ENCODE measurements at regions of chr9 and their contacts with region 1.

Region 1: DNA sequence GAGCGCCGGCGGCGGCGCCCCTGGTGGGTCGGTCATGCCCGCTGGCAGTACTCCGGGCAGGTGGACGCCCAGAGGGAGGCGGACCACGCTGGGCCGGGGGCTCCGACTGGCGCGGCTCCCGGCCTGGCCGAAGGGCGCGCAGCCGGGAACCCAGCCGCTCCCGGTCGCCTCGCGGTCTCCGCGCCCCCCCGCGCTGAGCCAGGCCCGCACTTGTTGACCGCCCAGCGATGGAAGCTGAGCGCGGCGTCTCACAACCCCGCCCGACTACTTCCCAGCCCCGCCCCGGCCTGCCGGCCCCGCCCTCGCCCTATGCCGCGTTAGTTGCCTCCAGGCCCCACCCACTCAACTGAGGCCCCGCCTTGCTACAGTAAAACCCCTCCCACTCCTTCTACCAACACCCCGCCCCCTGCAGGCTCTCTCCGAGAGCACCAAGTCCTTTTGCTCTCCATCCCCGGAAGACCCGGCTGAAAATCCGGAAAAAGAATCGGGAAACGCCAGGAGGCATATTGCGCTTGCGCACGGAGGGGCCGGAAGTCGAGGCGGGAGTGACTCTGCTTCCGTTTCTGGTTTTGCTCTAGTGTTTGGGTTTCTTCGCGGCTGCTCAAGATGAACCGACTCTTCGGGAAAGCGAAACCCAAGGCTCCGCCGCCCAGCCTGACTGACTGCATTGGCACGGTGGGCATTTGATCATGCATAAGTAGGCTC is at the starts of genes BAG1 and CHMP5:
- DNase-seq: peak; percentile 100
- H3K4me3 Mint-ChIP-seq: peak within 1 kb of the TSS; percentile 97
- H3K27ac Mint-ChIP-seq: peak within 1 kb of the TSS; percentile 99
- H3K4me1 Mint-ChIP-seq: peaks cover 52% of the 10 kb centered on the region
- H3K27me3 Mint-ChIP-seq: no peaks in the 10 kb centered on the region
- total RNA-seq, gene BAG1: 72.4 and 73.6 TPM in 2 replicates
- total RNA-seq, gene CHMP5: 73.9 and 77.7 TPM in 2 replicates

Region 2: GRCh38 chr9:33167046-33167808 is 97.4 kb before region 1 on chr9 and contains the start of gene B4GALT1:
- intact Hi-C with region 1: loop called (anchors 1 kb)
- DNase-seq: peak; percentile 97
- H3K4me3 Mint-ChIP-seq: peak within 1 kb of the TSS; percentile 95
- H3K27ac Mint-ChIP-seq: peak within 1 kb of the TSS; percentile 98
- H3K4me1 Mint-ChIP-seq: peaks cover 65% of the 10 kb centered on the region
- H3K27me3 Mint-ChIP-seq: no peaks in the 10 kb centered on the region
- total RNA-seq, gene B4GALT1: 53.8 and 55.7 TPM in 2 replicates

Region 3: DNA sequence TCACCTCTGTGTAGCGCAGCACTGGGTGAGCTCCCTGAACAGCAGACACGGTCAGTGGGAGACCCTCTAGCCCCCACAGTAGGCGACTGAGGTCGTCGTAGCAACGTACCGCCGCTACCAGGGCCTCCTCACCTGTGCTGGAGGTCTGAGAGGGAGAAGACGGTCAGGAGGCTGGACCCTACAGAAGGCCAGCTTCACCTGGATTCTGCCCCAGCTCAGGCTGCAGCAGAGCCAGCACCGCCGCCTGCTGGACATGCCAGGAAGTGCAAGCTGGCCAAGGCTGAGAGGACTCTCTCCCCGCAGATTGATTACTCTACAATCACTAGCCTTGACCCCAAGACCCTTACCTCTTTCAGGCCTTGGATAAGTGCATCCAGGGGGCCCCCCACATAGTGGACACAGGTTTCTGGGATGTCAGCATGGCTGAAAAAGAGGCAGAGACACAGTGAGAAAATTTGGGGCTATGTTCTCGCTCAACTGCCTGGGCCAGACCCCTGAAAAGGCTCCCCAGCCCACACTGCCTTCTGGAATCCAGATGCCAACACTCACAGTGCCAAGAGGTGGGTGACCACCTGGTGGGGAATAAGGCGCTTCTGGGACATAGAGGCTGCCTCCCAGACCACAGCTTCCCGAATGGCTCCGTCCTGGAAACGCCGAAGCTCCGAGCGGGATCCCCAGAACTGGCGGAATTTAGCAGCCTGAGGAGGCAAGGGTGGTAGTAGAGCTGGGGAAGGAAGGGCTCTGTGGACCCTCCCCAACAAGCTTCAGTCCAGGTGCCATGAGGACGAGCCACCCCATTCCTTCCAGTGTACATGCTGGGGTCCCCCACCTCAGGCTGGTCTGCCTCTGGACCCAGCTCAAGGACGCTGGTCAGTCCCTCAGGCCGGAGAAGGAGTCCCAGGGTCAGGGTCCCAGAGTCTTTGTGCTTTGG is 202.2 kb after region 1 on chr9:
- intact Hi-C with region 1: no loop called
- DNase-seq: peak; percentile 94
- H3K4me3 Mint-ChIP-seq: no peak overlapping the region
- H3K27ac Mint-ChIP-seq: no peak overlapping the region
- H3K4me1 Mint-ChIP-seq: peaks cover 6% of the 10 kb centered on the region
- H3K27me3 Mint-ChIP-seq: no peaks in the 10 kb centered on the region